RWPE1 (cell line): ENCODE measurements at regions of chr14 and their contacts with region 1.

Region 1: GRCh38 chr14:64823305-64823861 is 56.3 kb downstream of the SPTB start:
- DNase-seq: peak; percentile 86
- H3K27ac ChIP-seq: no peak overlapping the region
- CTCF ChIP-seq: peak; percentile 82

Region 2: DNA sequence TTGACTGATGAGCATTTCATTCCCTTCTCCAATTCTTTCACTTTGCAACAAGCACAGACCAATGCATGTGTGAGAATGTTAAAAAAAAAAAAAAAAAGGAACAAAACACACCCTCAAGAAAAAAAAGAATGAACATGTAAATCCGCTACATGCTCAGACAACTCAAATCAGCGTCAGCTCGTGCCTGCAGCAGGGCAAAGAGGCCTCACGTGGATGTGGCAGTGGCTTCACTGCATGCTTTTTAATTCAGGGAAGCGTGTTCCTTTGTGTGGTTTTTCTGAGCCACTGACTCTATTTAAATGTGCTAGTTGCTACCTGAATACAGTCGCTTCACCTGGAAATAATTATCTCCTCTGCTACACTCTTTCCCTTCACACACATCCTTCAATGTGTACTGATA is 218.5 kb before region 1 on chr14:
- CTCF ChIA-PET with region 1: no interaction called
- POLR2A ChIA-PET with region 1: no interaction called
- DNase-seq: peak; percentile 44
- H3K27ac ChIP-seq: peak overlapping the region; percentile 85
- CTCF ChIP-seq: no peak

Region 3: GRCh38 chr14:64857979-64858744 is 34.8 kb after region 1 on chr14:
- CTCF ChIA-PET with region 1: no interaction called
- POLR2A ChIA-PET with region 1: no interaction called
- DNase-seq: no peak
- H3K27ac ChIP-seq: no peak overlapping the region
- CTCF ChIP-seq: no peak

Region 4: GRCh38 chr14:64891839-64892375 is 68.5 kb after region 1 on chr14:
- CTCF ChIA-PET with region 1: interaction called, 36 read pairs
- POLR2A ChIA-PET with region 1: no interaction called
- DNase-seq: peak; percentile 38
- H3K27ac ChIP-seq: no peak overlapping the region
- CTCF ChIP-seq: peak; percentile 62

Region 5: DNA sequence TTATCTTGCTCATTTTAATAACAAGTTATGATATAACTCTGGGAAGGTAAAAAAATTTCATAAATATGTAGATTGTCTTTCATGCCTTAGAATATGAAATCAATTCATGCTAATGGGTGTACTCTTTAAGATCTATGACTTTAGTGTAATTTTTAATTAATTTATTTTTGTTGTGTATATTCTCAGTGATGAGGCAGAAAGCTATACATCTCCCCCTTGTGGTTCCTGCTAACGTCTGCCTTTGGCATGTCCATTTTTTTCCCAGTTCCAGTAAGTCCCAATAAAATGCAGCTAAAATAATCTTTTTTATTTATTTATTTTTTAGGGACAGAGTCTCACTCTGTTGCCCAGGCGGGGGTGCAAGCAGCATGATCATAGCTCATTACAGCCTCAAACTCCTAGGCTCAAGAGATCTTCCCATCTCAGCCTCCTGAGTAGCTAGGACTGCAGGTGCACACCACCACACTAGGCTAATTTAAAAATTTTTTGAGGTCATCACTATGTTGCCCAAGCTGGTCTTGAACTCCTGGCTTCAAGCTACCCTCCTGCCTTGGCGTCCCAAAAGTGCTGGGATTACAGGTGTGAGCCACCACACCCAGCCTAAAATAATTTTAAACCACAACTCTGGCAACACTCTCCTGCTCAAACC is 87.6 kb after region 1 on chr14:
- CTCF ChIA-PET with region 1: interaction called, 22 read pairs
- POLR2A ChIA-PET with region 1: no interaction called
- DNase-seq: peak; percentile 26
- H3K27ac ChIP-seq: no peak overlapping the region
- CTCF ChIP-seq: peak; percentile 59